Activated T-helper 1 cell treated with anti-CD3 and anti-CD28 coated beads, Interleukin-12 subunit alpha, Interleukin-12 subunit beta, Interleukin-2, Interleukin-4 antibody, amounts not matched to agents 30 ng/mL and 10 ng/mL and 1 ng/mL, durations not matched to agents 14 hours and 24 hours and 36 hours (primary cell): ENCODE measurements at regions of chr12 and their contacts with region 1.

Region 1: DNA sequence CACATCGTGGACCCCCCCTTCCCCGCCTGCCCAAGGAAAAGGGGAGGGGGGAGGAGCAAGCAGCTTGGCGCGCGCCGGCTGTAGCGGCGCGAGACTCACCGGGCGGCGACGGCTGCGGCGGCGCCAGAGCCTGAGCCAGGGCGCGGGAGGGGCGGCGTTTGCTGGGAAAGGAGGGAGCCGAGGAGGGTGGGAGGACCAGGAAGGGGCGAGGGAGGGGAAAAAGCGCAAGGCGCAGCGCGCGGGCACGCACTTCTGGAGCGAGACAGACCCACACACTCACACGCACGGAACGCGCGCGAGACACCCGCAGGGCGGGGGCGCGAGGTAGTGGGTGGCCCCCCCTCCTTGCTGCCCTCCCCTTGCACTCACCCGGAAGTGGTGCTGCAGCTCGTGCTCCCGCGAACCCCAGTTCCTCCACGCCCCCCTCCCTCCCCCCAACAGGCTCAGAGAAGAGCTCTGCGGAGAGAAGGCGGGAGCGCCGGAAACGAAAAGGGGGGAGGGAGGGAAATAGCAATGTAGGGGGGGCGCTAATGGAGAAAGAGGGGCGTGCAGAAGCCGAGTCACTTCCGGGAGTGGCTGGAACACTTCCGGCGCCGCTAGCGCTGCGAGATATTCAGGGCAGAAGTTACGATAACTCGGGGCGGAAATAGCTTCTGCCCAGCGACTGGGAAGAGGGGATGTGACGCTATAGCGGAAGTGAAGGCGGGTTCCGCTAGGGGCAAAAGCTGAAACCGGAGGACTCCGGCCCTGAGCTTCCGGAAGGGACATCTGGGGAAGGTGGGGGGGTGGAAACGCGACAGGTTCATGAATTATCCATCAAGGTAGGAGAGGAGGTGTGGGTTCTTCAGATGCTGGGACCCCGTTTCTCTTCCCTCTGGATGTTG is at the start of gene ZNF384:
- DNase-seq: peak; percentile 94
- H3K4me3 Mint-ChIP-seq: peak within 1 kb of the TSS; percentile 97
- H3K27ac Mint-ChIP-seq: peak within 1 kb of the TSS; percentile 87
- H3K4me1 Mint-ChIP-seq: peaks cover 58% of the 10 kb centered on the region
- H3K27me3 Mint-ChIP-seq: no peaks in the 10 kb centered on the region
- total RNA-seq, gene ZNF384: 79.6 and 89.8 TPM in 2 replicates

Region 2: GRCh38 chr12:6563448-6564050 is 125.7 kb before region 1 on chr12:
- intact Hi-C with region 1: loop called (anchors 1 kb)
- DNase-seq: peak; percentile 47
- H3K4me3 Mint-ChIP-seq: no peak overlapping the region
- H3K27ac Mint-ChIP-seq: peak overlapping the region; percentile 24
- H3K4me1 Mint-ChIP-seq: peaks cover 28% of the 10 kb centered on the region
- H3K27me3 Mint-ChIP-seq: no peaks in the 10 kb centered on the region

Region 3: GRCh38 chr12:6662906-6663742 is 26.1 kb before region 1 on chr12 and contains the start of gene ING4:
- intact Hi-C with region 1: loop called (anchors 1 kb)
- DNase-seq: peak; percentile 95
- H3K4me3 Mint-ChIP-seq: peak within 1 kb of the TSS; percentile 89
- H3K27ac Mint-ChIP-seq: peak within 1 kb of the TSS; percentile 91
- H3K4me1 Mint-ChIP-seq: peaks cover 30% of the 10 kb centered on the region
- H3K27me3 Mint-ChIP-seq: no peaks in the 10 kb centered on the region
- total RNA-seq, gene ING4: 14.6 and 15.0 TPM in 2 replicates

Region 4: GRCh38 chr12:6792522-6793201 is 103.4 kb after region 1 on chr12:
- intact Hi-C with region 1: loop called (anchors 5 kb)
- DNase-seq: peak; percentile 40
- H3K4me3 Mint-ChIP-seq: peak overlapping the region; percentile 94
- H3K27ac Mint-ChIP-seq: peak overlapping the region; percentile 87
- H3K4me1 Mint-ChIP-seq: peaks cover 65% of the 10 kb centered on the region
- H3K27me3 Mint-ChIP-seq: no peaks in the 10 kb centered on the region

Region 5: DNA sequence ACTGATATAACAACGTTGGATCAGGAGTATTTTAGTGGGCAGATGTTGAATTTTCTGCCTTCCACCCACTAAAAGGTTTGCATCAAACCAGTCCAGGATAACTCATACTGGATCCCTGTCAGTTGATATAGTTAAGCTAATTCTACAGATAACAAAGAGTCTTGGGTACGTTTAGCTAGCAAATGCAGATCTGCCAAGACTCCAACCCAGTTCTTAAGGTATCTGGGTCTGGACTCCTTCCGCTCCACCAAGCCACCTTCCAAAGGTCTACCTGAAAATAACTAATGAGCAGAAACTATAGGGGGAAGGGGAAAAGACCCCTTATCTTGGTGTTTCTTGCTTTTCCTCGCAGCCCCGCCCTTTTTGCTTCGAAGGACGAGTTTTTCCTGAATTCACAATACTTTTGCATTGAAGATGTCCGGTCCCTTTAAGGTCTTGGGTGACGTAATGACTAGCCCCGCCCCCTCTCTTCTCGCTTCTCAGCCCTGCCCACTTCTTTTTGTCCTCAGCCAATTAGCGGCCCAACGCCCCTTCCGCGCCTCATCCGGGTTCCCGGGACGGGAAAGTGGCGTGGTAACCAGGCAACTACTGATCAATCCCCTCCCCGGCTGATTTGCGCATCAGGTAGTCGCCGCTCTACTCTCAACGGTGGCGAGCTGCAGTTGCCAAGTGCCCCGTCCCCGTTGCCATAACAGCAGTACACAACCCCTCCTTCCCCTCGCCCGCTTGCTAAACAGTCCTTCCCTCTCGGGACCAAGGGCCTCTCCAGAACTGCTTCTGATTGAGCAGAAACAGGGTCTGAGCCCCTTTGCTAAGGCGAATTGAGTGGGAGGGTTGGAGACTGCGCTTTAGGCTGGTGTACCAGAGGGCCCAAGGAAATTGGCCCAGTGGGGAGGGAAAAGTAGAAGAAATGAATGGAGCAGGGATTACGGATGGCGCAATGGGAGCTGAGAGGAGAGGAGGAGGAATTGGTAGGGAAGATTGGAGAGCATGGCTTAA is 215.3 kb after region 1 on chr12 and contains the start of gene LRRC23:
- intact Hi-C with region 1: loop called (anchors 2 kb)
- DNase-seq: peak; percentile 97
- H3K4me3 Mint-ChIP-seq: no peak within 1 kb of the TSS
- H3K27ac Mint-ChIP-seq: no peak within 1 kb of the TSS
- H3K4me1 Mint-ChIP-seq: peaks cover 8% of the 10 kb centered on the region
- H3K27me3 Mint-ChIP-seq: no peaks in the 10 kb centered on the region
- total RNA-seq, gene LRRC23: 5.3 and 5.6 TPM in 2 replicates

Region 6: GRCh38 chr12:7188562-7189397 is 499.5 kb after region 1 on chr12:
- intact Hi-C with region 1: loop called (anchors 2 kb)
- DNase-seq: peak; percentile 49
- H3K4me3 Mint-ChIP-seq: peak overlapping the region; percentile 93
- H3K27ac Mint-ChIP-seq: peak overlapping the region; percentile 98
- H3K4me1 Mint-ChIP-seq: peaks cover 31% of the 10 kb centered on the region
- H3K27me3 Mint-ChIP-seq: peaks cover 4% of the 10 kb centered on the region

Region 7: DNA sequence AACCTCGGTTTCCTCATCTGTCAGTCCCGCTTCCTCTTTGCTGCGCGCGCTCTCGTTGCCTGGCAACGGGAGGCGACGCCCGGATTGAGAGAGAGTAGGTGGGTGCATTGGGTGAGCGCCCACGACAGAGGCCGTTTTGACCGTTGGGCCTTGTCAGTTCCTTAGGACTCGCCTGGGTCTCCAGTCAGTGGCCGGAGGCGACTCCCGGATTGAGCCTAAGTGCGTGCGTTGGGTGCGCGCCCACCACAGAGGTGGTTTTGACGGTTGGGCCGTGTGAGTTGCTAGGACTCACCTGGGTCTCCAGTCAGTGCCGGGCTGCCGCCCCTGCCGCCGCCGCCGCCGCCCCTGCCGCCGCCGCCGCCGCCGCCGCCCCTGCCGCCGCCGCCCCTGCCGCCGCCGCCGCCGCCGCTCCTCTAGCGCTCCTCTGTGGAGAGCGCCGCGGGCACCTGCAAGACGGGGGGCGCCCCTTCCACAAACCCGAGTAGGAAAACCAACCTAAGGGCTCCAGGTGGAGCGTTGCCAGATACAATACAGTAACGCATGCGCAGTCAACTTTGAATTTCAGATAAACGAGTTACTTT is 939.2 kb after region 1 on chr12:
- intact Hi-C with region 1: no loop called
- DNase-seq: no peak
- H3K4me3 Mint-ChIP-seq: no peak overlapping the region
- H3K27ac Mint-ChIP-seq: no peak overlapping the region
- H3K4me1 Mint-ChIP-seq: no peaks in the 10 kb centered on the region
- H3K27me3 Mint-ChIP-seq: peaks cover 16% of the 10 kb centered on the region